Posterior vena cava (tissue), 2 donors: ENCODE measurements at regions of chr18 and their contacts with region 1.

Region 1: GRCh38 chr18:13823707-13824395 is at the start of gene MC5R:
- DNase-seq: peak; percentile 87
- total RNA-seq, gene MC5R: not detected

Region 2: GRCh38 chr18:13800505-13801259 is 23.2 kb before region 1 on chr18:
- intact Hi-C with region 1: no loop called
- DNase-seq: no peak

Region 3: DNA sequence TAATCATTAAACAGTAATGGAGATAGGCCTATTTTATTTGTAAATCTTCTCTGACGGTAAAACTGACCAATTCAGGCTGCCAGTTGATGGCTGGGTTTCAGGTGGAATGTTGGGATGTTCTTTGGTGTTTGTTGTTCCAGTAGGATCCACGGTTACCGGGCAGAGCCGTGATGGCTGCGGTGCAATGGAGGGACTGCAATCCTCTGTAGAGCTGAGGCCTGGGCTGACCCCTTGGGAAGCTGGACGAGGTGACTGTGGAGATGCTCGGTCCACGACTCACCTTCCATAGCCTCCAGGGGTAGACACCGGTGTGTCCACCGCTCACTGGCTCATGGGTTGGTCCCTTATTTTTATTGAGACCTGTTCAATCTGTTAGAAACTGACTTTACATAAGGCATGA is 265.9 kb after region 1 on chr18:
- intact Hi-C with region 1: loop called in 1 of 2 experiments (anchors 10 kb)
- DNase-seq: no peak